Activated T-helper 1 cell treated with anti-CD3 and anti-CD28 coated beads, Interleukin-12 subunit alpha, Interleukin-12 subunit beta, Interleukin-2, Interleukin-4 antibody, amounts not matched to agents 30 ng/mL and 10 ng/mL and 1 ng/mL, durations not matched to agents 14 hours and 24 hours and 36 hours (primary cell): ENCODE measurements at regions of chr10 and their contacts with region 1.

Region 1: DNA sequence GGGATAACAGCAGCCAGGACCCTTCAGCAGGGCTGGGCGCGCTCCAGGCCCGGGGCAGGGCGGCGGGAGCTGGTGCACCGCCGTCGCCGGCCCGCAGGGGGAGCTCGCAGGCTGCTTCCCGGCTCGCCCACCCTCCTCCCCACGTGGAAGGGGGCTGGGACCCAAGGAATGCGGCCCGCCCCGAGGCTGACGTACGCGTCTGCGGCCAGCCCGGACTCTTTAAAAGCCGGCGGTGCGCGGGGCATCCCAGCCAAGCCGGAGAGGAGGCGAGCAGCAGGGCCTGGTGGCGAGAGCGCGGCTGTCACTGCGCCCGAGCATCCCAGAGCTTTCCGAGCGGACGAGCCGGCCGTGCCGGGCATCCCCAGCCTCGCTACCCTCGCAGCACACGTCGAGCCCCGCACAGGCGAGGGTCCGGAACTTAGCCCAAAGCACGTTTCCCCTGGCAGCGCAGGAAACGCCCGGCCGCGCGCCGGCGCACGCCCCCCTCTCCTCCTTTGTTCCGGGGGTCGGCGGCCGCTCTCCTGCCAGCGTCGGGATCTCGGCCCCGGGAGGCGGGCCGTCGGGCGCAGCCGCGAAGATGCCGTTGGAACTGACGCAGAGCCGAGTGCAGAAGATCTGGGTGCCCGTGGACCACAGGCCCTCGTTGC is at the start of gene PFKFB3:
- DNase-seq: peak; percentile 92
- H3K4me3 Mint-ChIP-seq: peak within 1 kb of the TSS; percentile 96
- H3K27ac Mint-ChIP-seq: peak within 1 kb of the TSS; percentile 92
- H3K4me1 Mint-ChIP-seq: peaks cover 46% of the 10 kb centered on the region
- H3K27me3 Mint-ChIP-seq: no peaks in the 10 kb centered on the region
- total RNA-seq, gene PFKFB3: 90.3 and 93.8 TPM in 2 replicates

Region 2: GRCh38 chr10:5889624-5890451 is 313.0 kb before region 1 on chr10 and contains the starts of genes ANKRD16 and FBH1:
- intact Hi-C with region 1: loop called (anchors 1 kb)
- DNase-seq: peak; percentile 99
- H3K4me3 Mint-ChIP-seq: peak within 1 kb of the TSS; percentile 91
- H3K27ac Mint-ChIP-seq: peak within 1 kb of the TSS; percentile 76
- H3K4me1 Mint-ChIP-seq: peaks cover 52% of the 10 kb centered on the region
- H3K27me3 Mint-ChIP-seq: no peaks in the 10 kb centered on the region
- total RNA-seq, gene ANKRD16: 11.3 and 12.4 TPM in 2 replicates
- total RNA-seq, gene FBH1: 66.9 and 70.6 TPM in 2 replicates

Region 3: GRCh38 chr10:6108603-6109443 is 94.0 kb before region 1 on chr10:
- intact Hi-C with region 1: loop called (anchors 1 kb)
- DNase-seq: peak; percentile 22
- H3K4me3 Mint-ChIP-seq: no peak overlapping the region
- H3K27ac Mint-ChIP-seq: peak overlapping the region; percentile 59
- H3K4me1 Mint-ChIP-seq: peaks cover 56% of the 10 kb centered on the region
- H3K27me3 Mint-ChIP-seq: no peaks in the 10 kb centered on the region

Region 4: DNA sequence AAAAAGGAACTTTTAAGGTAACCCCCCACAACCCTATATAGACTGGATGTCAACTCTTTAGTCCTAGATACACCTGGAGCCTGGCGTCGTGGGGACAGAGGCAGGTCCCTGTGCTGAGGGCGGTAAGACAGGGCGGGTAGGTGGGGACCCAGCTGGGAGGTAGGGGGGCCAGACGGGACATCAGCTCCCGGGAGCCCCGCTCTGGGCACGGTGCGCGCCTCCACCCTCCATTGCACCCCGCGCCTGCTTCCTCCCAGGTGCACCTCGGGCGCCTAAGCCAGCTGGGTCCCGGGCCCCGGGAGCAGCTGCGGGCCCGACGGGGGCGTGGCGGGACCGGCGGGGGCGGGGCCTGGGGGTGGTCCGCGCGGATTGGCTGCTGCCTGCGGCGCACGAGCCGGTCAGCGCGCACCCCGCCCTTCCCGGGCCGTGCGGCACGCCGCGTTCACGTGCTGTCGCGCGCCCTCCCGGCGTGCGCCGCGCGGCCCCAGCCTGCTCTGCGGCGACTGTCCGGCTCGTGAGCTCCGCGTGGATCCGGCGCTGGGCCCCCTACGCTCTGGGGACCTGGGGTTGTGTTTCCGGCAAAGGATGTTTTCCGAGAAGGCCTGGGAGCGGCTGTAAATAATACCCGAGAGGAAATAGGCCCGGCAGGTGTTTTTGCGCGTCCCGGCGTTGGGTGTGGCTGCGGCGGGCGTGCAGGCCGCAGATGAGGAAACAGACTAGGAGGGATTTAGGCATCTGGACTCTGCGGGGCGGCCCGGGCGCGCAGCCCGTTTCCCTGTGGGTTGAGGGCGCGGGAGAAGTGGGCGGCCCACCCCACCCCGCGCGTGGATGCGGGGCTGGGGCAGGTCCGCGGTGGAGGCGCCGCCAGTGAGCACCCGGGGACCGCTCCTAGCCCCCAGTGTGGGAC is 39.2 kb before region 1 on chr10:
- intact Hi-C with region 1: loop called (anchors 1 kb)
- DNase-seq: peak; percentile 88
- H3K4me3 Mint-ChIP-seq: peak overlapping the region; percentile 94
- H3K27ac Mint-ChIP-seq: peak overlapping the region; percentile 95
- H3K4me1 Mint-ChIP-seq: peaks cover 54% of the 10 kb centered on the region
- H3K27me3 Mint-ChIP-seq: no peaks in the 10 kb centered on the region

Region 5: DNA sequence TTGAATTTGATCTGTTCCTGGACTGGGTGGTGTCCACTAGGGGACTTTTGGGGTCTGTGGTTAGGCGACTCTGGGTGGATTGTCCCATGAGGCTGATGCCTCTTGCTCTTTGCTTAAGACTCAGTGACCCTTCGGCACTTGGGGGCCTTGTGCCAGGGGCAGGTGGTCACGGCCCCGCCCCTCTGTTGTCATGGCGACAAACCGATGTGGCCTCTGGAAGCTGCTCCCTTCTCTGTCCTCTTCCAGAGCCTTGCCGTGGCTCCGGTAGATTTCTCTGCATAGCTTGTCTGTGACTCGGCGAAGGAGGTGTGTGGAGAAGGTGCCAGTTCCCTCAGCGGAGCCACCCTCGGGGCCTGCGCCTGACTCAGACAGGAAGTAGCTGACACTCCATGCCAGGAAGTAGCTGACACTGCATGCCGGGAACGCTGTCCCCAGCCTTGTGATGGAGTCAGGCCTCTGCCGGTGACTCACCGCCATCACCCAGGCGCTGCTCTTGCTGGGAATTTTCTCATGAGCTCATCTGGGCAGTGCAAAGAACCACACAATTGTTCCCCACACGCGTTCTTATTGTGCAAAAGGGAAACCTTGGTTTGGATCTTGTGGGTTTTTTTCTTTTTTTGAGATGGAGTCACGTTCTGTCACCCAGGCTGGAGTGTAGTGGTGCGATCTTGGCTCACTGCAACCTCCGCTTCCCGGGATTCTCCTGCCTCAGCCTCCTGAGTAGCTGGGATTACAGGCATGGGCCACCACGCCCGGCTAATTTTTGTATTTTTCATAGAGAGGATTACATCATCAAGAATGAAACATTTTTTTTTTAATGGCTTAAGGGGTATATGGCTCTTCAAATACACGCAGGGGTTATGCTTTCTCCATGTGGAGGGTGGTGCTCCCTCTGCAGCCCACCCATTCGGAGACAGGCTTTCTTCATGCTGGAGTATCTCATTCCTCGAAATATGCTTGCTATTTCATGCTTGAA is 72.5 kb after region 1 on chr10:
- intact Hi-C with region 1: loop called (anchors 1 kb)
- DNase-seq: peak; percentile 86
- H3K4me3 Mint-ChIP-seq: peak overlapping the region; percentile 77
- H3K27ac Mint-ChIP-seq: peak overlapping the region; percentile 97
- H3K4me1 Mint-ChIP-seq: peaks cover 78% of the 10 kb centered on the region
- H3K27me3 Mint-ChIP-seq: no peaks in the 10 kb centered on the region

Region 6: DNA sequence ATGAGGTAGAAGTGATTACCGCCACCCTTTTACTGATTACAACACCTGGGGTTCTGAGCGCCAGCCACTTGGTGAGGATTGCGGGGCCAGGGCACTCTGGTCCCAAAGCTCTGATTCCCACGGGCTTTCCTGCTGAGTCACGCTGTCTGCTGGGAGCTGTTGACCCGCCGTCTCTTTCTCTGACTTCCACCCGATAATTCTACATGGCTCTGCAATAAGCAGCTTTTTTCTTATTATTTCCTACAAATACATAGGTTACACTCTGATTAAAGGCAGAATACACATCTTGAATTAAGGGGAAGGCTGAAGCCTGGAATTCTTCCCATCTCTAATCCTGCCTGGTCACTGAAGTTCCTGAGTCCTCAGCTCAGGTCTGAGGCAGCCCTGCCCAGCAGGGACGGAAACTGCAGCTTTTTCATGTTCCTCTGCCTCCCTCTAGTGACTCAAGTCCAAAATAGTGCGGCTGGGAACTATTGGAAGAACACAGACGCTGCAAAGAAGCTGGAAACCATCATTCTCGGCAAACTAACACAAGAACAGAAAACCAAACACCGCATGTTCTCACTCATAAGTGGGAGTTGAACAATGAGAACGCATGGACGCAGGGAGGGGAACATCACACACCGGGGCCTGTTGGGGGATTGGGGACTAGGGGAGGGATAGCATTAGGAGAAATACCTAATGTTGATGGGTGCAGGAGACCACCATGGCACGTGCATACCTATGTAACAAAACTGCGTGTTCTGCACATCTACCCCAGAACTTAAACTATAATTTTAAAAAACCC is 198.9 kb after region 1 on chr10:
- intact Hi-C with region 1: loop called (anchors 1 kb)
- DNase-seq: peak; percentile 52
- H3K4me3 Mint-ChIP-seq: peak overlapping the region; percentile 0
- H3K27ac Mint-ChIP-seq: no peak overlapping the region
- H3K4me1 Mint-ChIP-seq: peaks cover 25% of the 10 kb centered on the region
- H3K27me3 Mint-ChIP-seq: peaks cover 4% of the 10 kb centered on the region